ENCODE measurements at regions of chr5 and their contacts with region 1.

Region 1: GRCh38 chr5:128074171-128074570 is 9.4 kb upstream of the SLC12A2 start:
- DNase-seq: no peak
- ATAC-seq: no peak
- H3K4me3 ChIP-seq: no peak overlapping the region
- H3K4me3 Mint-ChIP-seq: no peak overlapping the region
- H3K27ac ChIP-seq: no peak overlapping the region
- H3K27ac Mint-ChIP-seq: no peak overlapping the region
- H3K4me1 ChIP-seq: peaks cover 0 to 6% of the 10 kb centered on the region in 2 experiments
- H3K4me1 Mint-ChIP-seq: peaks cover 16 to 29% (median 24%) of the 10 kb centered on the region in 3 donors
- H3K27me3 ChIP-seq: no peaks in the 10 kb centered on the region
- H3K27me3 Mint-ChIP-seq: no peaks in the 10 kb centered on the region

Region 2: DNA sequence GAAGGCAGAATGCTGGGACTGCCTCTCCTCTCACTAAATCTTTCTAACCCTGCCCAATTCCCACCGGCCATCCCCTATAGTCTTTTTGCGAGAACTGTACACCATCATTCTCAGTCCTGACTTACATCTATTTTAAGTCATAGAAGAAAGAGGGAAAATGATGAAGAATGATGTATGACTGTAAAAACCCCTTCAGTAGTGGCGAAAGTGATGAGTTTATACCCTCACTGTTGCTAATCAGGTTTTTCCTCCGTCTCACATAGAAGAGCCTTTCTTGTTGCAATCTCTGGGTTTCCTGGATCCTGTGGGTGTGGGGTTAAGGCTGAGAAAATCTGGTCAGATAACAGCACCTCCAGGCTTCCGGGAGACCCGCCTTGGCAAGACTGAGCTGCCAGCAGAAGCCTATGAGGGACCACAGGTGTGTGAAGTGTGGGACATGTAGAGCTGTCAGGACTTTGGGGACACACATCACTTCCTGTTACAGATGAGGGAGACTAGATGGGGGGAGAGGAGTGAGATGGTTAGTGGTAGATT is 137.7 kb before region 1 on chr5:
- CTCF ChIA-PET with region 1: no interaction called
- POLR2A ChIA-PET with region 1: interaction called in 1 of 2 experiments, 16 read pairs
- DNase-seq: peak in 27 of 35 experiments; percentile 1 to 67 (median 18)
- ATAC-seq: peak; percentile 17 to 68 (median 40)
- H3K4me3 ChIP-seq: no peak overlapping the region
- H3K4me3 Mint-ChIP-seq: no peak overlapping the region
- H3K27ac ChIP-seq: peak overlapping the region; percentile 29
- H3K27ac Mint-ChIP-seq: peak overlapping the region; percentile 36 to 74
- H3K4me1 ChIP-seq: peaks cover 0 to 7% of the 10 kb centered on the region in 2 experiments
- H3K4me1 Mint-ChIP-seq: peaks cover 4 to 5% (median 5%) of the 10 kb centered on the region in 3 donors
- H3K27me3 ChIP-seq: no peaks in the 10 kb centered on the region
- H3K27me3 Mint-ChIP-seq: no peaks in the 10 kb centered on the region

Region 3: GRCh38 chr5:128021411-128021810 is 52.8 kb before region 1 on chr5:
- CTCF ChIA-PET with region 1: no interaction called
- POLR2A ChIA-PET with region 1: interaction called in 1 of 2 experiments, 11 read pairs
- DNase-seq: no peak
- ATAC-seq: no peak
- H3K4me3 ChIP-seq: no peak overlapping the region
- H3K4me3 Mint-ChIP-seq: no peak overlapping the region
- H3K27ac ChIP-seq: no peak overlapping the region
- H3K27ac Mint-ChIP-seq: no peak overlapping the region
- H3K4me1 ChIP-seq: no peaks in the 10 kb centered on the region
- H3K4me1 Mint-ChIP-seq: no peaks in the 10 kb centered on the region
- H3K27me3 ChIP-seq: no peaks in the 10 kb centered on the region
- H3K27me3 Mint-ChIP-seq: no peaks in the 10 kb centered on the region

Region 4: GRCh38 chr5:129996896-129997295 is 1922.7 kb after region 1 on chr5:
- CTCF ChIA-PET with region 1: no interaction called
- POLR2A ChIA-PET with region 1: no interaction called
- DNase-seq: no peak
- ATAC-seq: no peak
- H3K4me3 ChIP-seq: no peak overlapping the region
- H3K4me3 Mint-ChIP-seq: no peak overlapping the region
- H3K27ac ChIP-seq: no peak overlapping the region
- H3K27ac Mint-ChIP-seq: no peak overlapping the region
- H3K4me1 ChIP-seq: no peaks in the 10 kb centered on the region
- H3K4me1 Mint-ChIP-seq: no peaks in the 10 kb centered on the region
- H3K27me3 ChIP-seq: no peaks in the 10 kb centered on the region
- H3K27me3 Mint-ChIP-seq: peaks cover 0 to 2% of the 10 kb centered on the region in 2 donors

Measured in T-cell (primary cell).